ENCODE measurements at regions of chr14 and their contacts with region 1.

Region 1: DNA sequence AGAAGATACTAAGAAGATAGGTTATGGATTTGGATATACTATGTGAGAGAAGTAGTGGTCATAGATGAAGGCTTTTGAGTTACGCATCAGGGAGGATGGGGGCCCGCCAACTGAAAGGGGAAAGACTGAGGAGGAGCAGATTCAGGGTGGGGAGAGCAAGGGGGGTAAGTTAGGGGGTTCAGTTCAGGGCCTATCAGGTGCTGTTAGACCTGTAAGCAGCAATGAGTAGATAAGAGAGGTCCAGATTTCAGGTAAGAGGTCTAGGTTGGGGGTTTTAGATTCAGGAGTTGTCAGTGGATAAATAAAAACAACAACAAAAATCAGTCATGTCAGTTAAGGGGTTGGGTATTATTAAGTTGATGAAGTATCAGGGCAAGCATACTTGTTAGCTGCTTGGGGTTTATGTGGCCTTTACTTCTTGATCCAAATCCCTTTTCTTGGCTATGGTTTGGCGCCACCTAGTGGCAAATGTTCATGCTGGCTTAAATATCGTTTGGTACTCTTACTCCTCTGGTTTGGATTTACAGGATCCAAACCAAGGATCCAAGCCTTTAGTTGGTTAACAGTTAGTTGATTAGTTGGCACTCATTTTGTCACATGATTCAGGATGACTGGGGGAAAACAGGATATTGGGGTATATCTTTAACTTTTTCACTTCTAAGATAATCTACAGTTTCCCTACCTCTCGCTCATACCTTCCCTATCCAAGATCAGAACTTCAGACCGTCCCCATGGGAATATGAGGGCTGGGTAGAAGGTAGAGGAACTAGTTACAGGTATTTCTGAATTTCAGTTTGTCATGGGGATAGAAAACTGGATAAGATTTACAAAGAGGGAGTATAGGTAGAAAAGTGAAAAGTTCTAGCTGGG is 65.1 kb downstream of the PCNX1 start:
- ATAC-seq: peak in 7 of 8 experiments; percentile 64 to 90 (median 75)
- H3K4me3 ChIP-seq: no peak overlapping the region
- H3K27ac ChIP-seq: no peak overlapping the region
- H3K4me1 ChIP-seq: peaks cover 0 to 5% of the 10 kb centered on the region in 2 donors

Region 2: GRCh38 chr14:70640938-70641547 is 331.3 kb before region 1 on chr14:
- in situ Hi-C with region 1: loop called in 1 of 9 experiments (anchors 25 kb)
- ATAC-seq: peak; percentile 32 to 71 (median 66)
- H3K4me3 ChIP-seq: peak overlapping the region; percentile 71 to 100 (median 83)
- H3K27ac ChIP-seq: peak overlapping the region in 1 of 2 donors; percentile 58
- H3K4me1 ChIP-seq: peaks cover 19% of the 10 kb centered on the region in 2 donors